PC-3 (cell line): ENCODE measurements at regions of chr10 and their contacts with region 1.

Region 1: GRCh38 chr10:132452631-132453469 is 55.9 kb downstream of the PWWP2B start:
- DNase-seq: peak; percentile 81
- ATAC-seq: peak; percentile 53
- H3K4me3 ChIP-seq: peak overlapping the region; percentile 51; the same call in 1 of the 2 replicates
- H3K27ac ChIP-seq: no peak overlapping the region
- H3K4me1 ChIP-seq: peaks cover 18% of the 10 kb centered on the region
- H3K27me3 ChIP-seq: no peaks in the 10 kb centered on the region
- CTCF ChIP-seq: peak; percentile 81

Region 2: DNA sequence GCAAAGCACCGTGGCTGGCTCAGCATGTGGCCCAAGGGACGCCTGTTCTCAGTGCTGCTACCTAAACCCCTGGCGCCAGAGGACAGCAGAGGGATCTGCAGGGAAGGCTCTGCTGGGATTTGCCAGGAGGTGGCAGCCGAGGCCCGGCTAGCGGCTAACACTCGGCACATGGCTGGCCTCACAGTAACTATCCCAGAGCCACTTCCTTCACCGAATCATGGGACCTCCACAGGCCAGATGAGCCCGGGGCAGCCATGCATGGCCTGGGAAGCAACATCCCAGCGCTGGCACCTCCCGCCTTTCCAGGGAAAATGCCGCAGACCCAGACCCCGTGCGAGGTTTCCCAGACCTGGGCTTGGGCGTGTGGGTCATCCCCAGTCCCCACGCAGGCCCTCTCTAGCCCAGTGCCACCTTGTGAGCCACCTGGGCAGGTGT is 229.7 kb before region 1 on chr10:
- CTCF ChIA-PET with region 1: no interaction called
- POLR2A ChIA-PET with region 1: no interaction called
- intact Hi-C with region 1: loop called (anchors 5 kb)
- DNase-seq: peak; percentile 73
- ATAC-seq: peak; percentile 98
- H3K4me3 ChIP-seq: no peak overlapping the region
- H3K27ac ChIP-seq: no peak overlapping the region
- H3K4me1 ChIP-seq: no peaks in the 10 kb centered on the region
- H3K27me3 ChIP-seq: no peaks in the 10 kb centered on the region
- CTCF ChIP-seq: peak; percentile 89

Region 3: DNA sequence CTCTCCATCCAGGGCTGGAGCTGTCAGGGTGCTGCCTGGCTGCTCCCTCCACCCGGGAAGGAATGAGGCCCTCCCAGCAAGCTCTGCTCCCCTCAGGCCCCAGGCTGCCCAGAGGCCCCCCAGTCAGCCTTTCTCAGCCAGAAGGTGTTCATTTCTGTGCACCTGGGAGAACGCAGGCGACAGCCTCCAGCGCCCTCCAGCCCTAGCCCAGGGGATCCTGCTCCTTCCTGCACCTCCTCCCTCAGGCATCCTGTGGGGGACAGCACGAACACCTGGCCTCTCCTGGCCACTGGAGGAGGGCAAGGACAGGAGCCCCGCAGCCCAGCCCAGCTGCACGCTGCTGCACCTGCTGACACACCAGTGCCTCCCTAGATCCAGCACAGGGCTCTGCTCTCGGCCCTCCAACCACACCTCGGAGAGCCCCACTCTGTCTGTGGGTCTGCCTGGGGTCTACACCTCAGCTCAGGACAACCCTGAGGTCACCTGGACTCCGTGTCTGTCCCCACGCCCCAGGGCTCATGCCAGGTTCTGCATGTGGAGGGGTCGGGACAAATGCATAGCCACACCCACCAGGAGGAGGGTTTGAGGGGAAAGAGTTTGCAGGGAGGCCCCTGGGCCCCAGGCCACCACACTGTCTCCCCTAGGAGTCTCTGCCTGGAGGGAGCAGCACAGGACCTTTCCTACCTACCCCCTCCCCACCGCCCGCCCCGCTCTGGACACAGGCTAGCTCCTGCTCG is 63.2 kb before region 1 on chr10:
- CTCF ChIA-PET with region 1: no interaction called
- POLR2A ChIA-PET with region 1: no interaction called
- intact Hi-C with region 1: loop called (anchors 2 kb)
- DNase-seq: no peak
- ATAC-seq: peak; percentile 42
- H3K4me3 ChIP-seq: no peak overlapping the region
- H3K27ac ChIP-seq: no peak overlapping the region
- H3K4me1 ChIP-seq: no peaks in the 10 kb centered on the region
- H3K27me3 ChIP-seq: no peaks in the 10 kb centered on the region
- CTCF ChIP-seq: no peak

Region 4: GRCh38 chr10:132700156-132701098 is 247.6 kb after region 1 on chr10:
- CTCF ChIA-PET with region 1: no interaction called
- POLR2A ChIA-PET with region 1: no interaction called
- intact Hi-C with region 1: no loop called
- DNase-seq: no peak
- ATAC-seq: no peak
- H3K4me3 ChIP-seq: no peak overlapping the region
- H3K27ac ChIP-seq: no peak overlapping the region
- H3K4me1 ChIP-seq: no peaks in the 10 kb centered on the region
- H3K27me3 ChIP-seq: no peaks in the 10 kb centered on the region
- CTCF ChIP-seq: no peak